ENCODE measurements at regions of chr9 and their contacts with region 1.

Region 1: DNA sequence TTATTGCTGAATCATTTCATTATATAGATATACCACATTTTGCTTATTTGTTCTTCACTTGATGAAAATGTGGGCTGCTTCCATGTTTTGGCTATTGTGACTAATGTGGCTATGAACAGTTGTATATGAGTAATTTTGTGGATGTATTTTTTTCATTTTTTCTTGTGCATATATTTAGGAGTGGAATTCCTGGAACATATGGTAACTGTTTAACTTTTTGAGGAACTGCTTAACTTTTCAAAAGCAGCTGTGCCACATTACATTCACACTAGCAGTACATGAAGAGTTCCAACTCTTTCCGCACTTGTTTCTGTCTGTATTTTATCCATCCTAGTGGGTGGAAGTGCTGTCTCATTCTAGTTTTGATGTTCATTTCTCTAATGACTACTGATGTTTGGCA is 67.8 kb downstream of the JAK2 start:
- DNase-seq: no peak
- H3K4me3 Mint-ChIP-seq: no peak overlapping the region
- H3K27ac Mint-ChIP-seq: no peak overlapping the region
- H3K4me1 Mint-ChIP-seq: peaks cover 20% of the 10 kb centered on the region
- H3K27me3 Mint-ChIP-seq: no peaks in the 10 kb centered on the region

Region 2: DNA sequence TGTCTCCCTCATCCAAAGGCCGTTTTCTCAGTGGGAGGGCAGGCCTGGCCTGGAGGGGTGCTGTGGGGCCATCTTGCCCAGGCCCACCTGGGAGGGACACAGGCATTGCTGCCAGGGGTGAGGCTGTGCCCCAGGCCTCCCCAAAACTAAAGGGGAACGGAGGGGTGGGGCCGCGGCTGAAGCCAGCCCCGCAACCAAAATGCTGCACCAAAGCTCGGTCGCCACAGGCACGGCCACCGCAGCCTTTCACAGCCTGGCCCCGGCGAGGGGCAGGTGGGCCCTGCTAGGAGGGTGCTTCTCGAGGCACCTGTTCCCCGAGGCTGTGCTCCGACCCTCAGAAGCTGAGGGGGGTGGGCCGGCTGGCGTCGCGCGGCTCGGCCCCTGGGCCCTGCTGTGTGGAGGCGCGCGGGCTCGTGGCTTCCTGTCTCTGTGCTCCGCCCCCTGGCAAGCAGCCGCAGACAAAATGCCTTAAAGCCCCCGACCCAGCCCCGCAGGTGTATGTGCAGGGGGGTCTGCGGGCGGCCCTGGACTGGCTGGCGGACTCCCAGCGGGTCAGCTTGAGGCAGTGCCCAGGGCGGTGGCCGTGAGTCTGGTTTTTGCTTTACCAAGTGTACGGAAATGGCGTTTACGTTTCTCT is 10.1 kb before region 1 on chr9:
- intact Hi-C with region 1: loop called (anchors 2 kb)
- DNase-seq: no peak
- H3K4me3 Mint-ChIP-seq: peak overlapping the region; percentile 58
- H3K27ac Mint-ChIP-seq: peak overlapping the region; percentile 34
- H3K4me1 Mint-ChIP-seq: peaks cover 31% of the 10 kb centered on the region
- H3K27me3 Mint-ChIP-seq: no peaks in the 10 kb centered on the region